Vagina (tissue), 2 donors: ENCODE measurements at regions of chr5 and their contacts with region 1.

Region 1: GRCh38 chr5:156834916-156835315 is 15.2 kb upstream of the PPP1R2B start:
- DNase-seq: no peak
- H3K4me3 ChIP-seq: no peak overlapping the region
- H3K27ac ChIP-seq: no peak overlapping the region
- H3K4me1 ChIP-seq: no peaks in the 10 kb centered on the region
- H3K27me3 ChIP-seq: no peaks in the 10 kb centered on the region
- CTCF ChIP-seq: no peak
- POLR2A ChIP-seq: no peak

Region 2: DNA sequence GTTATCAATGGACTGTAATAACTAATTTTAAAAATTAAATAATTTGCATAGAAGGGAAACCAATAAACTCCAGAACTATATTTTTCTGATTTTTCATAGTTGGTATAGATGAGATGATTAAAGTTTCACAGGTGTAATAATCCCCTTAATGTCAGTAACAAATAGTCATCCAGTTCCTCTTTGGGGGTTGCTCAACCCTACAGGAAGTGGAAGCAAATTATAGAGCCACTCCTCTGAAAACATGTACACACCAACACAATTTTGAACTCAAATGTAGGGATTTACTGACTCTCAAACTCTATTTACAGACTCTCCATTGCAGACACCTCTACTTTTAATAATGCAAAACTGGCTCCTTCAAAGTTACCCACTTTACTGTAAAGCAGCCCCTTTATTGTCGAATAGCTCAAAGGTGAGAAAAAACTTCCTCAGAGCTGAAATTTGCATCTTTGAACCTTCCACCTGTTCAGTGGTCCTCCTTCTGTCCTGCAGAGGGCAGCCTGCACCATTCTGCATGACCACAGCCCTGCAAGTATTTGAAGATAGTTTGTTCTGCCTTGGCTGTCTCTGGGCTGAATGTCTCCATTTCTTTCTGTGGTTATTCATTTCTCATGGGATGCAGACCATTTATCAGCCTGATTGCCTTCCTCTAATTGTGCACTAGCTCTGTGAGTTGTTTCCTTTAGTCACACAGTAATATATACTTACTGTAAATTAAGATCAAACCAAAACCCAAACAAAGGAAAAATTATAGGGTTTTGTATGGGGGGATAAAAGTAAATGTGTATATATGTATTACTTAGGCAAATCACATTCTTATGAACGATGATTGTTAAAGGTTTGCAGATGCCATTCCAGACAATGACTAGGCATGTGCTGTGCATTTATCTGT is 891.2 kb before region 1 on chr5:
- intact Hi-C with region 1: loop called (anchors 5 kb)
- DNase-seq: no peak
- H3K4me3 ChIP-seq: no peak overlapping the region
- H3K27ac ChIP-seq: no peak overlapping the region
- H3K4me1 ChIP-seq: no peaks in the 10 kb centered on the region
- H3K27me3 ChIP-seq: no peaks in the 10 kb centered on the region
- CTCF ChIP-seq: peak in 1 of 3 experiments; percentile 47
- POLR2A ChIP-seq: no peak